ENCODE measurements at regions of chr7 and their contacts with region 1.

Region 1: GRCh38 chr7:149838224-149838947 is at the start of gene ZNF862:
- DNase-seq: peak; percentile 94 to 96 (median 95)
- H3K4me3 ChIP-seq: peak within 1 kb of the TSS; percentile 53 to 94 (median 82)
- H3K4me3 Mint-ChIP-seq: peak within 1 kb of the TSS; percentile 86 to 88
- H3K27ac ChIP-seq: peak within 1 kb of the TSS in 1 of 2 donors; percentile 75
- H3K27ac Mint-ChIP-seq: peak within 1 kb of the TSS in 4 of 7 donors; percentile 36 to 83 (median 56)
- H3K4me1 ChIP-seq: peaks cover 11 to 16% of the 10 kb centered on the region in 2 donors
- H3K4me1 Mint-ChIP-seq: peaks cover 18% of the 10 kb centered on the region
- H3K27me3 ChIP-seq: no peaks in the 10 kb centered on the region
- H3K27me3 Mint-ChIP-seq: peaks cover 0 to 4% (median 0%) of the 10 kb centered on the region in 3 donors
- CTCF ChIP-seq: no peak
- polyA plus RNA-seq, gene ZNF862: 1.3 to 18.4 (median 2.7) TPM

Region 2: GRCh38 chr7:149714050-149714909 is 124.1 kb before region 1 on chr7:
- intact Hi-C with region 1: loop called in 1 of 2 experiments (anchors 5 kb)
- DNase-seq: peak; percentile 71 to 77 (median 76)
- H3K4me3 ChIP-seq: peak overlapping the region; percentile 61 to 85 (median 75)
- H3K4me3 Mint-ChIP-seq: peak overlapping the region; percentile 79 to 88
- H3K27ac ChIP-seq: no peak overlapping the region
- H3K27ac Mint-ChIP-seq: no peak overlapping the region
- H3K4me1 ChIP-seq: peaks cover 15 to 19% of the 10 kb centered on the region in 2 donors
- H3K4me1 Mint-ChIP-seq: peaks cover 22% of the 10 kb centered on the region
- H3K27me3 ChIP-seq: peaks cover 0 to 14% of the 10 kb centered on the region in 2 donors
- H3K27me3 Mint-ChIP-seq: peaks cover 3 to 17% (median 7%) of the 10 kb centered on the region in 3 donors
- CTCF ChIP-seq: no peak

Region 3: GRCh38 chr7:149771721-149772240 is 66.6 kb before region 1 on chr7:
- intact Hi-C with region 1: loop called in 1 of 2 experiments (anchors 5 kb)
- DNase-seq: peak; percentile 81 to 89 (median 82)
- H3K4me3 ChIP-seq: peak overlapping the region; percentile 89 to 98 (median 94)
- H3K4me3 Mint-ChIP-seq: peak overlapping the region; percentile 81 to 85
- H3K27ac ChIP-seq: peak overlapping the region; percentile 36 to 60
- H3K27ac Mint-ChIP-seq: peak overlapping the region; percentile 26 to 92 (median 87)
- H3K4me1 ChIP-seq: peaks cover 44 to 45% of the 10 kb centered on the region in 2 donors
- H3K4me1 Mint-ChIP-seq: peaks cover 40% of the 10 kb centered on the region
- H3K27me3 ChIP-seq: no peaks in the 10 kb centered on the region
- H3K27me3 Mint-ChIP-seq: peaks cover 0 to 5% (median 0%) of the 10 kb centered on the region in 3 donors
- CTCF ChIP-seq: no peak

Region 4: GRCh38 chr7:149873074-149873969 is 34.9 kb after region 1 on chr7 and contains the start of gene ATP6V0E2:
- intact Hi-C with region 1: loop called in 1 of 2 experiments (anchors 5 kb)
- DNase-seq: peak; percentile 83 to 92 (median 90)
- H3K4me3 ChIP-seq: peak within 1 kb of the TSS; percentile 51 to 86 (median 76)
- H3K4me3 Mint-ChIP-seq: peak within 1 kb of the TSS; percentile 82 to 90
- H3K27ac ChIP-seq: peak within 1 kb of the TSS in 1 of 2 donors; percentile 6
- H3K27ac Mint-ChIP-seq: peak within 1 kb of the TSS in 6 of 7 donors; percentile 61 to 84 (median 76)
- H3K4me1 ChIP-seq: peaks cover 20 to 26% of the 10 kb centered on the region in 2 donors
- H3K4me1 Mint-ChIP-seq: peaks cover 27% of the 10 kb centered on the region
- H3K27me3 ChIP-seq: peaks cover 0 to 2% of the 10 kb centered on the region in 2 donors
- H3K27me3 Mint-ChIP-seq: peaks cover 3 to 11% (median 6%) of the 10 kb centered on the region in 3 donors
- CTCF ChIP-seq: peak; percentile 16
- polyA plus RNA-seq, gene ATP6V0E2: 4.4 to 13.3 (median 8.2) TPM